PC-3 (cell line): ENCODE measurements at regions of chr11 and their contacts with region 1.

Region 1: GRCh38 chr11:119067371-119068222 is at the start of gene VPS11:
- DNase-seq: peak; percentile 99
- ATAC-seq: peak; percentile 98
- H3K4me3 ChIP-seq: peak within 1 kb of the TSS; percentile 87
- H3K27ac ChIP-seq: peak within 1 kb of the TSS; percentile 43
- H3K4me1 ChIP-seq: peaks cover 14% of the 10 kb centered on the region; the same call in 1 of the 2 replicates
- H3K27me3 ChIP-seq: no peaks in the 10 kb centered on the region
- CTCF ChIP-seq: no peak
- total RNA-seq, gene VPS11: 48.3 and 48.7 TPM in 2 replicates

Region 2: DNA sequence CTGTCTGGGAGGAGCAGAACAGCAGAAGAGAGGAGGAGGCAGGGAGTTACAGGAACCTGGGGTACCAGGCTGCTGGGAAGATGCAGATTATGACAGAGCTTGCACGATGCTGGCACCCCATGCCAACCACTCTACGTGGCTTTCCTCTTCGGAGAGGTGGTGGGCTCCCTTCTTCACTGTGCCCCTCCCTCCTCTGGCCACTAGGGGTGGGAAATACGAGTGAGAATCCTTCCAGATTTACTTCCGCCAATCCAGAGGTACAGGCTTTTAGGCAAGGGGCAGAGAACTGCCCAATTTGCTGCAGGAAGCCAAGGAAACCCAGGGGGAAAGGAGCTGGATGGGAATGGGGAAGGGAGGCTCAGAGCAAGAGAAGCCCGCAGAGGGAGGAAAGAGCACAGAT is 22.9 kb before region 1 on chr11:
- CTCF ChIA-PET with region 1: no interaction called
- POLR2A ChIA-PET with region 1: interaction called, 31 read pairs
- intact Hi-C with region 1: no loop called
- DNase-seq: no peak
- ATAC-seq: no peak
- H3K4me3 ChIP-seq: no peak overlapping the region
- H3K27ac ChIP-seq: no peak overlapping the region
- H3K4me1 ChIP-seq: no peaks in the 10 kb centered on the region
- H3K27me3 ChIP-seq: no peaks in the 10 kb centered on the region
- CTCF ChIP-seq: no peak; the same call in 1 of the 2 replicates

Region 3: DNA sequence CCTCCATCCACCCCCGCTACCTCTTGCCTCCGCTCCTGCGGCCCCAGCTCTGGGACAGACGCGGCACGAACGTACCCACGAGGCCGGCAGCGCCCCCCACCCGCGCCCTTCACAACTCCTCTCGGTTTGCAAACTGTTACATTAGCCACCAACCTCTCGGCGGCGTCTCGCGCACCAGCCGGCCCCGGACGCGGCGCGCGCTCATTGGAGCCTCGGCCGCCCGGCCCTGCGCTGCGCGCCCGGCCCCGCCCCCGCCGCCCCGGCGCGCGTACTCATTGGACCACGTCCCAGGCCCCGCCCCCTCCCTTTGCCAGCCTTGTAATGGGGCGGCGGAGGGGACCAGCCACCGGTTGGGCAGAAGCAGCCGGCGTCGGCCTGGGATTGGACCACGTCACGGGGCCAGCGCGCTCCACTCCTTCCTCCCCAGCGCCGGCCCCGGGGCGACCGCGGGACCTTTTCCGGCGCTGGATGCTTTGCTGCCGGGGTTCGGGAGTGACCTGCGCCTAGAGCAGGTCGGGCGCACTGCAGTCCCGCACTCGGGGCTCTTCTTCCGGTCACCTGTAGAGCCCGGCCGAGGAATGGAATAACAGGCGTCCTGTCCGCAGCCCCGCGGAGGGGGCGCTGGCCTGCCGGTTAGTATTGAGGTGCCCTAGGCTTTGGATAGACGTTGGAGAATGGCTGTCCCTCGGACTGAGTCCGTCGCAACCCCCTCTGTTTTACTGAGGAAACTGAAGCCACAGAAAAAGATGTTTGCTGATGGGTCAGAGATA is 10.4 kb before region 1 on chr11 and contains the start of gene HYOU1:
- CTCF ChIA-PET with region 1: interaction called, 3 read pairs
- POLR2A ChIA-PET with region 1: interaction called, 7 read pairs
- intact Hi-C with region 1: loop called (anchors 1 kb)
- DNase-seq: peak; percentile 98
- ATAC-seq: peak; percentile 93
- H3K4me3 ChIP-seq: peak within 1 kb of the TSS; percentile 93
- H3K27ac ChIP-seq: peak within 1 kb of the TSS; percentile 62
- H3K4me1 ChIP-seq: peaks cover 15% of the 10 kb centered on the region
- H3K27me3 ChIP-seq: no peaks in the 10 kb centered on the region
- CTCF ChIP-seq: peak; percentile 24
- total RNA-seq, gene HYOU1: 168 and 208 TPM in 2 replicates

Region 4: GRCh38 chr11:119084663-119085436 is 17.3 kb after region 1 on chr11 and contains the start of gene HMBS:
- CTCF ChIA-PET with region 1: no interaction called
- POLR2A ChIA-PET with region 1: interaction called, 34 read pairs
- intact Hi-C with region 1: no loop called
- DNase-seq: peak; percentile 98
- ATAC-seq: peak; percentile 91
- H3K4me3 ChIP-seq: peak within 1 kb of the TSS; percentile 80
- H3K27ac ChIP-seq: peak within 1 kb of the TSS; percentile 80
- H3K4me1 ChIP-seq: peaks cover 23% of the 10 kb centered on the region
- H3K27me3 ChIP-seq: no peaks in the 10 kb centered on the region
- CTCF ChIP-seq: no peak
- total RNA-seq, gene HMBS: 9.3 and 22.5 TPM in 2 replicates

Region 5: GRCh38 chr11:119095066-119095880 is 27.7 kb after region 1 on chr11:
- CTCF ChIA-PET with region 1: interaction called, 3 read pairs
- POLR2A ChIA-PET with region 1: interaction called, 11 read pairs
- intact Hi-C with region 1: no loop called
- DNase-seq: peak; percentile 100
- ATAC-seq: peak; percentile 79
- H3K4me3 ChIP-seq: peak overlapping the region; percentile 90
- H3K27ac ChIP-seq: peak overlapping the region; percentile 53
- H3K4me1 ChIP-seq: peaks cover 28% of the 10 kb centered on the region
- H3K27me3 ChIP-seq: no peaks in the 10 kb centered on the region
- CTCF ChIP-seq: 0 out of 2 replicates have a peak, but pooled peaks have one; percentile 29